Endothelial cell of umbilical vein (primary cell): ENCODE measurements at regions of chr7 and their contacts with region 1.

Region 1: GRCh38 chr7:100478966-100479665 is at the start of gene TSC22D4:
- DNase-seq: peak; percentile 90
- H3K4me3 ChIP-seq: peak within 1 kb of the TSS; percentile 91 to 99 (median 91)
- H3K27ac ChIP-seq: peak within 1 kb of the TSS; percentile 35
- H3K4me1 ChIP-seq: peaks cover 27% of the 10 kb centered on the region
- H3K27me3 ChIP-seq: no peaks in the 10 kb centered on the region
- CTCF ChIP-seq: no peak
- POLR2A ChIP-seq: peak; percentile 94
- total RNA-seq, gene TSC22D4: 66.3 and 84.4 TPM in 2 replicates

Region 2: DNA sequence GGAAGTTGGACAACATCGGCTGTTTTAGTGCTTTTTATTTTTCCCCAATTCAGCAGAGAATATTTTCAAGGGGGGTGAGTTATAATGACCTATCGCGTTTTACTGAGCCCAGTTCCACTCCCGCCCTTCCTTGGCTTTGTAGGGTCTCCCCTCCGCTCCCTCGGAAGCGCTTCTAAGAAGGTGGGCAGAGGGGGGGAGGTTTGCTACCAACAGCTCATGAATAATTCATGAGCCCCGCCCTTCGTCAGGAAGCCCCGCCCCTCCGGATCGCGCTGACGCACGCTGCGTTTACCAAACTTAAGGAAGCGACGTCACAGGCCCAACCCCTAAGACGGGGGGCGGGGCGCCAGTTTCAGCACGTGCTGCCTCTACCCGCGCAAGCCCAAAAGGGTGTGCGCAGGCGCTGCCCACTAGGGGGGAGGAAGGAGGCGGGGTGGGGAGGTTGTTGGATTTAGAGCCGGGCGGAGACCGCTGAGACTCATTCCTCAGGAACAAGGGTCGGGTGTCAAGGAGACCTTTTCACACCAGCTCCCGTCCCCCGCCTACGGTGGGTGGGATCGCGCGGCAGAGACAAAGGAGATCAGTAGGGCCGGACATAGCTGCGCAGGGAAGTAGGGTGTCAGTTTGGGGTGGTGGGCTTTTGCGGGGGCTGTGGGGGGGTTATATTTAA is 50.0 kb before region 1 on chr7:
- CTCF ChIA-PET with region 1: interaction called, 4 read pairs
- POLR2A ChIA-PET with region 1: interaction called, 3 read pairs
- dilution Hi-C with region 1: no loop called
- intact Hi-C with region 1: loop called (anchors 2 kb)
- DNase-seq: peak; percentile 100
- H3K4me3 ChIP-seq: peak overlapping the region; percentile 55 to 80 (median 69)
- H3K27ac ChIP-seq: peak overlapping the region; percentile 89
- H3K4me1 ChIP-seq: peaks cover 19% of the 10 kb centered on the region
- H3K27me3 ChIP-seq: no peaks in the 10 kb centered on the region
- CTCF ChIP-seq: no peak
- POLR2A ChIP-seq: peak; percentile 92

Region 3: GRCh38 chr7:100538654-100539435 is 59.7 kb after region 1 on chr7 and contains the start of gene AGFG2:
- CTCF ChIA-PET with region 1: interaction called, 13 read pairs
- POLR2A ChIA-PET with region 1: no interaction called
- dilution Hi-C with region 1: no loop called
- intact Hi-C with region 1: loop called (anchors 2 kb)
- DNase-seq: peak; percentile 100
- H3K4me3 ChIP-seq: peak within 1 kb of the TSS; percentile 43 to 96 (median 45)
- H3K27ac ChIP-seq: peak within 1 kb of the TSS; percentile 0
- H3K4me1 ChIP-seq: peaks cover 13% of the 10 kb centered on the region
- H3K27me3 ChIP-seq: no peaks in the 10 kb centered on the region
- CTCF ChIP-seq: no peak
- POLR2A ChIP-seq: peak; percentile 67
- total RNA-seq, gene AGFG2: 36.3 and 44.6 TPM in 2 replicates

Region 4: DNA sequence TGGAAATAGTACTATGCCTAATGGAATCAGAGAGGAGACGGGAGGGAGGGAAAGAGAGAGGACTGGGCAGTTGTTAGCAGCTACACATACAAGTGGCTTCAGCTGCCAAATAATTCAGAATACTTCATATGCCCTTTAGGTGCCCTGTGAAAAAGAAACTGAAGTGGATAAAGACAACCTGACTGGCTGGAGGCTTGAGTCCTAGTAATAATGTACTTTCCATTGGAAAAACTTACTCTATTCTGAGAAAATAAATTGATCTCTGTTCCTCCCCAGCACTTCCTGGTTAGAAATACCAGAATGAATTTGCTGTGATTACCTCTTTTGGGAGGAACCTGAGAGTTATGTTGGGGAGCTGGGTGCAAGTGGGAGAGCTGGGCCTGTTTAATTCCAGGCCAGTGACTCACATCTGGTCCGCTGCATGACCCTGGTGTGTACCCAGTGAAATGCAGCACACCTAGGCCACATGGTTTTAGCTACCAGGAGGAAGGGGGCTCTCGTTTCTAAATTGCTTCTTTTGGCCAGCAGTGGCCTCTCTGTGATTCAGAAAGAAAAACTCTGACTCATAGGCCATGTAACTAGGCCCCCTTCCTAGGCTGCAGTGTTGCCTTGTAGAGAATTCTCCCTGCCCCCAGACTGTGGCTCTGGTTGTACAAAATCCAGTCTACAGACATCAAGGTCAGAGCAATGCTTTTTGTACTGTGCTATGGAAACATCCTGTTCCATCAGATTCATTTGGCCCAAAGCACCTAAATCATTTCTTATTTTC is 66.4 kb after region 1 on chr7:
- CTCF ChIA-PET with region 1: interaction called, 13 read pairs
- POLR2A ChIA-PET with region 1: no interaction called
- dilution Hi-C with region 1: no loop called
- intact Hi-C with region 1: loop called (anchors 1 kb)
- DNase-seq: peak; percentile 92
- H3K4me3 ChIP-seq: peak overlapping the region in 1 of 3 experiments; percentile 2
- H3K27ac ChIP-seq: peak overlapping the region; percentile 94
- H3K4me1 ChIP-seq: peaks cover 52% of the 10 kb centered on the region
- H3K27me3 ChIP-seq: no peaks in the 10 kb centered on the region
- CTCF ChIP-seq: peak; percentile 9 to 21
- POLR2A ChIP-seq: peak; percentile 61